GM23248 (cell line): ENCODE measurements at regions of chr2 and their contacts with region 1.

Region 1: GRCh38 chr2:228657807-228658402 is 476.4 kb upstream of the SPHKAP start:
- DNase-seq: peak; percentile 69
- H3K4me3 ChIP-seq: no peak overlapping the region
- H3K27ac ChIP-seq: no peak overlapping the region
- H3K4me1 ChIP-seq: peaks cover 1% of the 10 kb centered on the region
- H3K27me3 ChIP-seq: no peaks in the 10 kb centered on the region

Region 2: GRCh38 chr2:227884511-227884947 is 773.4 kb before region 1 on chr2:
- in situ Hi-C with region 1: loop called (anchors 25 kb)
- DNase-seq: peak; percentile 68
- H3K4me3 ChIP-seq: no peak overlapping the region
- H3K27ac ChIP-seq: no peak overlapping the region
- H3K4me1 ChIP-seq: peaks cover 10% of the 10 kb centered on the region; the same call in 1 of the 2 replicates
- H3K27me3 ChIP-seq: no peaks in the 10 kb centered on the region

Region 3: DNA sequence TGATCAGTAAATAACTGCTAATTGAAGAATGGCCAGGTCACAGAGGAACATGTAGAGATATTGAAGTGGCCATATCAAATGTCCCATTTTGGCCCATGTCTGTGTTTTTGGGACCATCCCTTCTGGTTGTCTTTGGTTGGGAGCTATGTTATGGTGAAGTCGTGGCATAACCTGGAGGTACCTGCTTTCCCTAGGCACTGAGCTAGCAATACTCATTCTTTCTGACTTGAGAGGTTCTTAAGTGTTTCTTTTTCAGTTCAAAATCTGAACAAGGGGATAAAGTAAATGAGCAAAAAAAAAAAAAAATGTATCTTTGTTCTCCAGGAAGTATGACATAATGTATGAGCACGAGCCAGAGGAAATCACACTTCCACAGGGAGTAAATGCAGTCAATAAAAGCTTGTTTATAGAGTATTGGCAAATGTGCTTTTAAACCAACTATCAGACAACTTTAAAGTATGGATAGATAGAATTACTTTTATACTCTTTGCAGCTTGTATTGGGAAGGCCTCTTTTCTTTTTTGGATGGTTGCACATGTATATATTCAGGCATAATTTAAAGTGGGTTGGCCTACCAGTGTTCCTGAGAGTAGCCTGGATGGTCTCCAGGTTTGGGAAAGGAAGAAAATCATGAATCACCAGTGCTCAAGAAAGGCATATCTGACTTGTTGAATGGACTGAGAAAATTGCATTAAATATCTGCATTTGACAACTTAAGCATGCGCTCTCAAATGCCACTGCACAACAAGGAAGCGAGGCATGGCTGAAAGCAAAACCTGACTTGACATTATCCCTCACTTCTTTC is 601.4 kb before region 1 on chr2:
- in situ Hi-C with region 1: loop called (anchors 10 kb)
- DNase-seq: no peak
- H3K4me3 ChIP-seq: no peak overlapping the region
- H3K27ac ChIP-seq: no peak overlapping the region
- H3K4me1 ChIP-seq: no peaks in the 10 kb centered on the region
- H3K27me3 ChIP-seq: peaks cover 45% of the 10 kb centered on the region

Region 4: GRCh38 chr2:228446734-228447133 is 211.2 kb before region 1 on chr2:
- in situ Hi-C with region 1: no loop called
- DNase-seq: peak; percentile 62
- H3K4me3 ChIP-seq: no peak overlapping the region
- H3K27ac ChIP-seq: no peak overlapping the region
- H3K4me1 ChIP-seq: no peaks in the 10 kb centered on the region
- H3K27me3 ChIP-seq: no peaks in the 10 kb centered on the region

Region 5: DNA sequence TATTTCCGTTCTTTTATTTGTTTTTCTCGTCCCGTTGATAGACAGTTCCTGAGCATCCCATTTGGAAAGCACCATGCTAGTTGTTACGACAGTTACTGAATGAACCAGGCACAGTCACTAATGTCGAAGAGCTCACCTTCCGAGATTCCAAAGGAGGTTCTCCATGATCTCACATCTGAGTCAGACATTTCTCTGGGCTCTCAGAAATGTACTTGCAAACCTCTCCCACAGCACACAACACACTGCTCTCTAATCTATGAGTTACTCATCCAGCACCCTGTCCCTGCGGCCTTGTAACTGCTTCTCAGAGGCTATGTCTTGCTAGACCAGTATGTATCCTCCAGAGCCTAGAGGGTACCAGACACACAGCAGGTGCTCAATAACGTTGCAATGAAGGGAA is 881.7 kb after region 1 on chr2:
- in situ Hi-C with region 1: no loop called
- DNase-seq: peak; percentile 1
- H3K4me3 ChIP-seq: no peak overlapping the region
- H3K27ac ChIP-seq: no peak overlapping the region
- H3K4me1 ChIP-seq: no peaks in the 10 kb centered on the region
- H3K27me3 ChIP-seq: no peaks in the 10 kb centered on the region